HepG2 (cell line): ENCODE measurements at regions of chr5 and their contacts with region 1.

Region 1: DNA sequence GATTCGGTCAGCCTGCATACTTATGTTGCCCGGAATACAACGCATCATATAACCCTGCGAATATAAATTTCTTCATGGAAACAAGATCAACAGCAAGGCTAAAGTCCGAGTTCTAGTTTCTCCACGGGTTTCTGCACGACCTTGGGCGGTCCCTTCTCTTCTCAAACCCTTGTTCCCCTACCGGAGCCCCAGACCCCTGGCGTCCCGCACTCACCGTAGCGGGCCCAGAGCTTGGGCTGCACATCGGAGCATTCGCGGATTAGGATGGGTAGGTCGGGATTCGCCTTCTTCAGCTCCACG is 438 bp downstream of the NDUFA2 start:
- DNase-seq: no peak
- ATAC-seq: peak; percentile 31; the same call in 2 of the 3 replicates
- H3K4me3 ChIP-seq: peak overlapping the region; percentile 82 to 98 (median 95)
- H3K27ac ChIP-seq: peak overlapping the region; percentile 69
- H3K4me1 ChIP-seq: peaks cover 32% of the 10 kb centered on the region
- H3K27me3 ChIP-seq: no peaks in the 10 kb centered on the region; a peak in 2 of 5 replicates
- CTCF ChIP-seq: no peak
- EP300 ChIP-seq: no peak
- POLR2A ChIP-seq: no peak
- RAD21 ChIP-seq: no peak

Region 2: GRCh38 chr5:140401362-140402257 is 245.4 kb before region 1 on chr5 and contains the start of gene ANKHD1:
- CTCF ChIA-PET with region 1: no interaction called
- POLR2A ChIA-PET with region 1: interaction called, 9 read pairs
- in situ Hi-C with region 1: no loop called
- intact Hi-C with region 1: loop called (anchors 10 kb)
- DNase-seq: peak; percentile 100
- ATAC-seq: peak; percentile 82
- H3K4me3 ChIP-seq: peak within 1 kb of the TSS; percentile 80 to 97 (median 95)
- H3K27ac ChIP-seq: peak within 1 kb of the TSS; percentile 97
- H3K4me1 ChIP-seq: peaks cover 49% of the 10 kb centered on the region
- H3K27me3 ChIP-seq: no peaks in the 10 kb centered on the region; a peak in 1 of 5 replicates
- CTCF ChIP-seq: no peak
- EP300 ChIP-seq: no peak; a peak in 1 of 4 replicates
- POLR2A ChIP-seq: peak; percentile 90 to 92
- RAD21 ChIP-seq: peak; percentile 16; the same call in 1 of the 2 replicates
- total RNA-seq, gene ANKHD1: 69.9 and 101 TPM in 2 replicates

Region 3: GRCh38 chr5:140557136-140557805 is 89.7 kb before region 1 on chr5 and contains the start of gene SRA1:
- CTCF ChIA-PET with region 1: no interaction called
- POLR2A ChIA-PET with region 1: interaction called, 16 read pairs
- in situ Hi-C with region 1: no loop called
- intact Hi-C with region 1: no loop called
- DNase-seq: peak; percentile 85
- ATAC-seq: peak; percentile 95
- H3K4me3 ChIP-seq: peak within 1 kb of the TSS; percentile 80 to 96 (median 84)
- H3K27ac ChIP-seq: peak within 1 kb of the TSS; percentile 55
- H3K4me1 ChIP-seq: peaks cover 37% of the 10 kb centered on the region
- H3K27me3 ChIP-seq: no peaks in the 10 kb centered on the region
- CTCF ChIP-seq: peak; percentile 33
- EP300 ChIP-seq: no peak; a peak in 1 of 4 replicates
- POLR2A ChIP-seq: peak; percentile 82 to 95
- RAD21 ChIP-seq: peak; percentile 51
- total RNA-seq, gene SRA1: 32.8 and 38.1 TPM in 2 replicates

Region 4: GRCh38 chr5:140596321-140596741 is 50.7 kb before region 1 on chr5:
- CTCF ChIA-PET with region 1: no interaction called
- POLR2A ChIA-PET with region 1: no interaction called
- in situ Hi-C with region 1: no loop called
- intact Hi-C with region 1: no loop called
- DNase-seq: no peak
- ATAC-seq: no peak
- H3K4me3 ChIP-seq: no peak overlapping the region
- H3K27ac ChIP-seq: no peak overlapping the region
- H3K4me1 ChIP-seq: peaks cover 13% of the 10 kb centered on the region
- H3K27me3 ChIP-seq: no peaks in the 10 kb centered on the region; a peak in 1 of 5 replicates
- CTCF ChIP-seq: no peak
- EP300 ChIP-seq: no peak
- POLR2A ChIP-seq: no peak
- RAD21 ChIP-seq: no peak

Region 5: DNA sequence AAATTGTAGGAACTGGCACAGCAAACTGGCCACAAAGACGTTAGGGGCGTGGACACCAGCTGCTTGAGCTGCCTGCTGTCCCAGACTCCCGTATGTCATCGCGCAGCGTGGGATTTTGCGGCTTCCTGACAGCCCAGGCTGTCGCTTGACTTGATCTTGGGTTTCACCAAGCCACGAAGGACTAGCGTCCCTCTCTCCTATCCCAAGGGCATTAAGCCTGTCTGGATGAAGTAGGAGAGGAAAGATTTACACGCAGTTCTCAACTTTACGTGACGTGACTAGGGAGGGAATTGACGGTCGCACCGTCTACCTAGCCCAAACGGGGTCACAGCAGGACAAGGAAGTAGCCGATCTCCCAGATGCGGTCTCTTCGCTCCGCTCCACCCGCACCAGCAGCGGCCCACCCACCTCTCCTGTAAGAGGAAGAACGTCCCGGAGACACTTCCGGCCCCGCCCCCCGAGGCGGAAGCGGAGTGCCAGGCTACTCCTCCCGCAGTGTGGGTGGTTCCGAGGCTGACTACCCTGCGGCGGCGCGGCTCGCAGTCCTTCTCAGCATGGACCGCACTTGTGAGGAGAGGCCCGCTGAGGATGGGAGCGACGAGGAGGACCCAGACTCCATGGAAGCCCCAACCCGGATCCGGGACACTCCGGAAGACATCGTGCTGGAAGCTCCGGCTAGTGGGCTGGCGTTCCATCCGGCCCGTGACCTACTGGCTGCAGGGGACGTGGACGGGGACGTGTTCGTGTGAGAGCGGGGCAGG is 17.5 kb after region 1 on chr5 and contains the start of gene WDR55:
- CTCF ChIA-PET with region 1: no interaction called
- POLR2A ChIA-PET with region 1: interaction called, 48 read pairs
- in situ Hi-C with region 1: no loop called
- intact Hi-C with region 1: no loop called
- DNase-seq: peak; percentile 90
- ATAC-seq: peak; percentile 99
- H3K4me3 ChIP-seq: peak within 1 kb of the TSS; percentile 75 to 100 (median 91)
- H3K27ac ChIP-seq: peak within 1 kb of the TSS; percentile 76
- H3K4me1 ChIP-seq: peaks cover 28% of the 10 kb centered on the region
- H3K27me3 ChIP-seq: no peaks in the 10 kb centered on the region; a peak in 1 of 5 replicates
- CTCF ChIP-seq: no peak; the same call in none of the 2 replicates
- EP300 ChIP-seq: peak in 1 of 2 experiments; percentile 19; a peak in 1 of 4 replicates
- POLR2A ChIP-seq: peak; percentile 81 to 97
- RAD21 ChIP-seq: peak; percentile 55
- total RNA-seq, gene WDR55: 18.2 and 18.5 TPM in 2 replicates

Region 6: GRCh38 chr5:140700177-140701144 is 53.5 kb after region 1 on chr5 and contains the start of gene ZMAT2:
- CTCF ChIA-PET with region 1: no interaction called
- POLR2A ChIA-PET with region 1: interaction called, 22 read pairs
- in situ Hi-C with region 1: no loop called
- intact Hi-C with region 1: no loop called
- DNase-seq: peak; percentile 97
- ATAC-seq: peak; percentile 97
- H3K4me3 ChIP-seq: peak within 1 kb of the TSS; percentile 71 to 94 (median 82)
- H3K27ac ChIP-seq: peak within 1 kb of the TSS; percentile 71
- H3K4me1 ChIP-seq: peaks cover 18% of the 10 kb centered on the region
- H3K27me3 ChIP-seq: no peaks in the 10 kb centered on the region; a peak in 1 of 5 replicates
- CTCF ChIP-seq: no peak
- EP300 ChIP-seq: no peak
- POLR2A ChIP-seq: peak; percentile 72 to 84
- RAD21 ChIP-seq: no peak
- total RNA-seq, gene ZMAT2: 92.8 and 141 TPM in 2 replicates

Region 7: DNA sequence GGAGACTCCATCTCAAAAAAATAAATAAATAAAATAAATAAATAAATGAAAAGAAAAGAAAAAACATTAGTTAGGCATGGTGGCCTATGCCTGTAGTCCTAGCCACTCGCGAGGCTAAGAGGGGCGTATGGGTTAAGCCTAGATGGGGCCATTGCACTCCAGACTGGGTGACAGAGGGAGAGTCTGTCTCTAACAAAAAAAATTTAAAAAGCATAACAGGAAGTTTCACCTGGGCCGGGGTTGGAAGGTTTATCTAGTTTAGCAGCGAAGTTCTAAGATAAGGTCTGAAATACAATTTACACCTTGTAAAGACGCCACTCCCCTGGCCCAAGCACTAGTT is 71.2 kb after region 1 on chr5:
- CTCF ChIA-PET with region 1: no interaction called
- POLR2A ChIA-PET with region 1: interaction called, 20 read pairs
- in situ Hi-C with region 1: no loop called
- intact Hi-C with region 1: loop called (anchors 2 kb)
- DNase-seq: no peak
- ATAC-seq: peak; percentile 2; the same call in 2 of the 3 replicates
- H3K4me3 ChIP-seq: peak overlapping the region; percentile 23 to 64 (median 60); a peak in 5 of 6 replicates
- H3K27ac ChIP-seq: peak overlapping the region; percentile 79
- H3K4me1 ChIP-seq: peaks cover 16% of the 10 kb centered on the region
- H3K27me3 ChIP-seq: no peaks in the 10 kb centered on the region
- CTCF ChIP-seq: no peak
- EP300 ChIP-seq: no peak
- POLR2A ChIP-seq: no peak; a peak in 1 of 4 replicates
- RAD21 ChIP-seq: no peak